Activated naive CD4-positive, alpha-beta T cell treated with anti-CD3 and anti-CD28 coated beads for 36 hours (primary cell): ENCODE measurements at regions of chr3 and their contacts with region 1.

Region 1: DNA sequence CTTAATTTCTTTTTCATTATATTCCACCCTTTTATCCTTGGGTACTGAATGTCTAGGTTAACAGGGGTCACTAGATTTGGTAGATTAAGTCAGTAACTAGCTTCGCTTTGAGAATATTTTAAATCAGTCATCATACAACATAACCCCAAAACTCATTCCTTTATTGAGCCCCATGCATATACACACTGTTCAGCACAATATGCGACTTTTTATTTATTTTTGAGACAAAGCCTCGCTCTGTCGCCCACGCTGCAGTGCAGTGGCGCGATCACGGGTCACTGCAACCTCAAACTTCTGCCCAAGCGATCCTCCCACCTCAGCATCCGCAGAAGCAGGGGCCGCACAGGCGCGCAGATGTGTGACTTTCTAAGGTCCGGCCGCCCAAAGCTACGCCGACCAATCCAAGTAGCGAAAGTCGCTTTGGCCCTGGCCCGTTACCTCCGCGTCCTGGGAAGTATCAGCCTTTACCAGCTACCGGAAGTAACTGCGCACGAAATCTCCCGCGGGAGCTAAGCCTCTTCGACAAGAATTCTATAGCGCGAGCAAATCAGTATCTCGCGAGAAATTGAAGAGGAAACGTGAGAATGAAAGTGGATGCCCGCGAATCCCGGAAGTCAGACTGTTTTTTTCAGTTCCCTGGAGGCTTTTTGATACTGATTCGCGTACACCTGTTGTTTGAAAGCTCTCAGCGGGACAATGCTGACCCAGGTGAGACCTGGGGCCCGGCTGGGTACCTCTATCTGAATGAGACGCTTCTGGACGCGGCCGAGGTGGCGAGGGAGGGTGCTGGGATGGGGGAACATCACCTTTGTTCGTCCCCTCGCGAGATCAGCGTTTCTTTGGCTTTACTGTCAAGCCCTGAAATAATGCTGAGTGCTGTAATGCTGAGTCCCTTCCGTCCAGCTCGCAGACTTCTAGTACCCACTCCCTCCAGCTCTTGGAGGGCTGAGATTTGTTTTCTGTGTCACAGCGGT is at the starts of genes DHFR2 and NSUN3:
- DNase-seq: peak; percentile 88
- H3K4me3 Mint-ChIP-seq: peak within 1 kb of the TSS; percentile 95
- H3K27ac Mint-ChIP-seq: peak within 1 kb of the TSS; percentile 99
- H3K4me1 Mint-ChIP-seq: peaks cover 59% of the 10 kb centered on the region
- H3K27me3 Mint-ChIP-seq: no peaks in the 10 kb centered on the region
- total RNA-seq, gene DHFR2: 4.5 to 5.3 TPM
- total RNA-seq, gene NSUN3: 10.9 to 15.8 TPM

Region 2: GRCh38 chr3:93906245-93906644 is 156.5 kb before region 1 on chr3:
- CTCF ChIA-PET with region 1: no interaction called
- intact Hi-C with region 1: no loop called
- DNase-seq: no peak
- H3K4me3 Mint-ChIP-seq: no peak overlapping the region
- H3K27ac Mint-ChIP-seq: no peak overlapping the region
- H3K4me1 Mint-ChIP-seq: no peaks in the 10 kb centered on the region
- H3K27me3 Mint-ChIP-seq: no peaks in the 10 kb centered on the region

Region 3: GRCh38 chr3:93979833-93980676 is 82.7 kb before region 1 on chr3 and contains the start of gene ARL13B:
- CTCF ChIA-PET with region 1: no interaction called
- intact Hi-C with region 1: loop called (anchors 1 kb)
- DNase-seq: peak; percentile 96
- H3K4me3 Mint-ChIP-seq: peak within 1 kb of the TSS; percentile 81
- H3K27ac Mint-ChIP-seq: no peak within 1 kb of the TSS
- H3K4me1 Mint-ChIP-seq: peaks cover 12% of the 10 kb centered on the region
- H3K27me3 Mint-ChIP-seq: no peaks in the 10 kb centered on the region
- total RNA-seq, gene ARL13B: 8.0 to 8.3 TPM

Region 4: GRCh38 chr3:94036909-94037507 is 25.7 kb before region 1 on chr3:
- CTCF ChIA-PET with region 1: interaction called, 4 read pairs
- intact Hi-C with region 1: loop called (anchors 2 kb)
- DNase-seq: no peak
- H3K4me3 Mint-ChIP-seq: no peak overlapping the region
- H3K27ac Mint-ChIP-seq: no peak overlapping the region
- H3K4me1 Mint-ChIP-seq: no peaks in the 10 kb centered on the region
- H3K27me3 Mint-ChIP-seq: no peaks in the 10 kb centered on the region

Region 5: GRCh38 chr3:94083261-94083660 is 20.5 kb after region 1 on chr3:
- CTCF ChIA-PET with region 1: no interaction called
- intact Hi-C with region 1: no loop called
- DNase-seq: no peak
- H3K4me3 Mint-ChIP-seq: no peak overlapping the region
- H3K27ac Mint-ChIP-seq: no peak overlapping the region
- H3K4me1 Mint-ChIP-seq: peaks cover 34% of the 10 kb centered on the region
- H3K27me3 Mint-ChIP-seq: no peaks in the 10 kb centered on the region

Region 6: GRCh38 chr3:95135943-95136342 is 1073.2 kb after region 1 on chr3:
- CTCF ChIA-PET with region 1: no interaction called
- intact Hi-C with region 1: no loop called
- DNase-seq: no peak
- H3K4me3 Mint-ChIP-seq: no peak overlapping the region
- H3K27ac Mint-ChIP-seq: no peak overlapping the region
- H3K4me1 Mint-ChIP-seq: no peaks in the 10 kb centered on the region
- H3K27me3 Mint-ChIP-seq: no peaks in the 10 kb centered on the region